Endothelial cell of umbilical vein (primary cell): ENCODE measurements at regions of chr17 and their contacts with region 1.

Region 1: GRCh38 chr17:17401271-17401781 is 75.5 kb upstream of the MED9 start:
- DNase-seq: no peak
- H3K4me3 ChIP-seq: no peak overlapping the region
- H3K27ac ChIP-seq: no peak overlapping the region
- H3K4me1 ChIP-seq: peaks cover 24% of the 10 kb centered on the region
- H3K27me3 ChIP-seq: no peaks in the 10 kb centered on the region
- CTCF ChIP-seq: peak in 1 of 2 donors; percentile 3
- POLR2A ChIP-seq: no peak

Region 2: GRCh38 chr17:17344462-17345293 is 56.6 kb before region 1 on chr17:
- CTCF ChIA-PET with region 1: no interaction called
- POLR2A ChIA-PET with region 1: no interaction called
- dilution Hi-C with region 1: no loop called
- intact Hi-C with region 1: no loop called
- DNase-seq: no peak
- H3K4me3 ChIP-seq: no peak overlapping the region
- H3K27ac ChIP-seq: no peak overlapping the region
- H3K4me1 ChIP-seq: no peaks in the 10 kb centered on the region
- H3K27me3 ChIP-seq: no peaks in the 10 kb centered on the region
- CTCF ChIP-seq: no peak
- POLR2A ChIP-seq: no peak

Region 3: GRCh38 chr17:17416007-17416399 is 14.7 kb after region 1 on chr17:
- CTCF ChIA-PET with region 1: interaction called, 5 read pairs
- POLR2A ChIA-PET with region 1: no interaction called
- dilution Hi-C with region 1: no loop called
- intact Hi-C with region 1: loop called (anchors 1 kb)
- DNase-seq: peak; percentile 91
- H3K4me3 ChIP-seq: no peak overlapping the region
- H3K27ac ChIP-seq: peak overlapping the region; percentile 94
- H3K4me1 ChIP-seq: peaks cover 48% of the 10 kb centered on the region
- H3K27me3 ChIP-seq: no peaks in the 10 kb centered on the region
- CTCF ChIP-seq: no peak
- POLR2A ChIP-seq: no peak